Motor neuron (in vitro differentiated cells): ENCODE measurements at regions of chr22 and their contacts with region 1.

Region 1: DNA sequence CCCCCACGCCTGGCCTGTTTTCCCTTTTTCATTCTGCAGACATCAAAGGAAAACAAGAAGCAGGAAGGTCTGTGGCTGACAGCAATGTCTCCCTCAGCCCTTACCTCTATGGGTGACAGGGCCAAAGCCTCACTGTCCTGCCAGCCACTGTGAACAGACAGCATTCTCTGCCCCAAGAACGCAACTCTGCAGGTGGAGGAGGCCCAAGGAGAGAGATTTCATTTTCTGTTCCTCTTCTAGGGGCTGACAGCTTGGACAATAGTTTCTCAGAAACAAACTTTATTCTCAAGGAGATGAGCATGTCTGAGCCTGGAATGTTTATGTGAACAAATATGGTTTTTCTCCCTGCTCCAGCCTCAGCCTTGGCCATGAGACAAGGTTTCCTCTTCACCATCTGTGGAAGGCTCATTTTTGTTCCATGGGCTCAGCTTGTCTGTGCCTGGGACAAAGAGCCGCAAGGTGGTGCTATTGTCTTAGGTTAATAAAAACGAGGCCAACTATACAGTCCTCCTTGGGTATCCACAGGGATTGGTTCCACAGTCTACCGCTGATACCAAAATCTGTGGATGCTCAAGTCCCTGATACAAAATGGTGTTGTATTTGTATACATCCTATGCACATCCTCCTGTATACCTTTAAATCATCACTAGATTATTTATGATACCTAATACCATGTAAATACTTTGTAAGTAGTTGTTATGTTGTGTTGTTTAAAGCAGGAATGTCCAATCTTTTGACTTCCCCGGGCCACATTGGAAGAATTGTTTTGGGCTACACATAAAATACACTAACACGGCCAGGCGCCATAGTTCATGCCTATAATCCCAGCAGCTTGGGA is 5.8 kb downstream of the PIWIL3 start:
- ATAC-seq: peak; percentile 71 to 94 (median 91)
- H3K4me3 ChIP-seq: no peak overlapping the region
- H3K27ac ChIP-seq: no peak overlapping the region
- H3K4me1 ChIP-seq: no peaks in the 10 kb centered on the region

Region 2: GRCh38 chr22:24871611-24872184 is 102.9 kb after region 1 on chr22:
- in situ Hi-C with region 1: loop called in 1 of 9 experiments (anchors 25 kb)
- ATAC-seq: no peak
- H3K4me3 ChIP-seq: no peak overlapping the region
- H3K27ac ChIP-seq: no peak overlapping the region
- H3K4me1 ChIP-seq: no peaks in the 10 kb centered on the region

Region 3: DNA sequence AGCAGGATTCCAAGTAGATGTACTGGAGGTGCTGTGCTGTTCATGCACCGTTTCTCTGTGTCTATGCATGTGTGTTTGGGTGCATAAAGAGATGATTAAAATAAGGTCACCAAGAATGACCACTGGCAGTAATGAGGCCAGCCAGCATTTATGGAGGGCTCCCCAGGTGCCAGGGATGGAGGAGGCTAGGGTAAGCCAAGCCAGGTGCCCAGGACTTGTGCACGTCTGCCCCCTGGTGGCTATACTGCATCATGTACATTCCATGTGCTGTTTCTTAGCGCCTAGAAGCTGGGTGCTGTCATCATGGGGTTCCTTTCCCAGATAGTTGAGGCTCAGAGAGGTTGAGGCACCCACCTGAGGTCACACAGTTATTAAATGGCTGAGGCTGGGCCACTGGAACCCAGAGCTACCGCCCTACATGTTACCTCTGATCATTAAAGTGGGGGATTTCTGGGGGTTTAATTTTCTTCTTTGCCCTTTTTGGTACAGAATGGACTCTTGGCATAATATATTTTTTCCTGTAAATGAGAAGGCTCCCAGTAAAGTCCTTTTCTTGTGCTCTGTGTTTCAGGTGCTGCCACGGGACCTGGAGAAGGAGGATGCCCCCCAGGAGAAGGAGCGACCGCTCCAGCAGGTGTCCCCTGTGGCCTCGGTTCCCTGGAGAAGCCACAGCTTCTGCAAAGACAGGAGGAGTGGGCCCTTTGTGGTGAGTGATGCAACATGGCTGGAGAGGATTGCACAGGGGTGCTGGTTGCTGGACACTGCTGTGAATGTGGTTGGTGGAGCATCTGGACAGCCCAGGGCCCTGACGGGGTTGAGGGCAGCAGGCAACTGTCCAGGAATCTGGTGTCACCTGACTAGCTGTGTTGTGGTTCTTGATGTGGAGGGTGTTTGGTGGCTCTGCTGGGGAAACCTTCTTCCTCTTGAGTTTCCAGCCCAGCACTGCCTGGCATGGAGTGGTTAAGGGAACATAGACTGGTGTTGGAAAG is 280.2 kb after region 1 on chr22:
- in situ Hi-C with region 1: loop called in 5 of 9 experiments (anchors 25 kb)
- ATAC-seq: peak; percentile 39 to 85 (median 64)
- H3K4me3 ChIP-seq: no peak overlapping the region
- H3K27ac ChIP-seq: no peak overlapping the region
- H3K4me1 ChIP-seq: no peaks in the 10 kb centered on the region

Region 4: DNA sequence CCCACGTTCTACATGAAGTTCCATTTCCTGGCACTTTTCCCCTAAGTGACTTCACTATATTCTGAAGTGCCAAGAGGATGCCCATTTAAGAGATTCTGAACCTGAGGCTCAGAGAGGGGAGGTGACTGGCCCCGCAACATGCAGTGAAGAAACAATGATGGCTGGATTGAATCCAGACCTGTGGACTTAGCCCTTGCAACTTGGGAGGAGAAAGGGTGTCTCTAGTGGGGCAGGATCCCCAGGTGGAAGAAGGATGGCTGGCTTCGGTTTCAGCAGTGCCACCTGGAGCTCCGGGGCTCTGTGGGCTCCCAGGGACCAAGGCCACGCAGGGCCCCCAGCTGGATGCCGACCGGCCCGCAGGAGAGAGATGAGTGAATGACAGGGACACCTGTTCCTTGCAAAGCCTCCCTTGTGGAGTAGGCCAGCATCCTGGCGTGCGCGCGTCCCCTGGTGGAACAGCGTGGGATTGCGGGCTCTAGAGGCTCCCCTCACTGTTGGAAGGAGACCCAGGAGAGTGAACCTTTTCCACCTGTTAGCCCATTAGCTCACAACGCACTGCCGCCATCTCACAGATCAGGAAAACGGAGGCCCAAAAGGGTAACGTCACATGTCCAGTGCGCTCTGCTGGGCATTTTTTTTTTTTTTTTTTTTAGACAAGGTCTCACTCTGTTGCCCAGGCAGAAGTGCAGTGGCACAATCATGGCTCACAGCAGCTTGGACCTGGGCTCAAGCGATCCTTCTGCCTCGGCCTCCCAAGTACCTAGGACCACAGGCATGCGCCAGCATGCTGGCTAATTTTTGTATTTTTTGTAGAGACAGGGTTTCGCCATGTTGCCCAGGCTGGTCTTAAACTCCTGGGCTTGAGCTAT is 288.5 kb after region 1 on chr22:
- in situ Hi-C with region 1: loop called in 4 of 9 experiments (anchors 25 kb)
- ATAC-seq: peak; percentile 76 to 99 (median 90)
- H3K4me3 ChIP-seq: no peak overlapping the region
- H3K27ac ChIP-seq: no peak overlapping the region
- H3K4me1 ChIP-seq: no peaks in the 10 kb centered on the region